A673 (cell line): ENCODE measurements at regions of chr13 and their contacts with region 1.

Region 1: DNA sequence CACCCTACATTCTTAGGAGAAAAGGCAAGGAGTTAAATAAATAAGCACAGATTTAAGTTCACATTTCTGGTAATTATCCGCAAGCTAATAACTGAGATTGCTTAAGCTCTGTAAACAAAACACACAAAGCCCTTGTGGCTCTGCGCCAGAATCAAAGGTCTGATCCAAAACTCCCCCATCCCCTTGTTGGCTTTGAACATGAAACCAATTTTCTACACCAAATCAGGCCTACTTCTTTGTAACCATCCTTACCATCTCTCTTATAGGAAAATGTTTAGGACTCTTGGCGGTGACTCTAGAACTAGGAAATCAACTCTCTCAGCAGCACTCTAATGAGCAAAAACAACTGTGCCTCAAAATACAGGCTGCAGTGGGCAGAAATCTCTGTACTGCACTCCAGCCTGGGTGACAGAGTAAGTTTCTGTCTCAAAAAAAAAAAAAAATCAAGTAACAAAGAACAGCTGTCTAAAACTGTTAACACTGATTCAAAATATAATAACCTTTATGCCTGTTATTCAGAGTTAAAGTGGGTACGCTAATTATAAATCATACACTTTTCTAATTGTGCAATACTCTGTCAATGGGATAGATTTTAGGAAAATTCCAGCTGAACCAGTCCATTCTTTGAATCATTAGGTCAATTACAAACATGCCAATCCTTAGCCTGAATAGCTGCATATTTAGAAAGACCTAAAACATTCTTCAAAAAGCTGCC is 25.8 kb downstream of the ABCC4 start:
- DNase-seq: peak; percentile 44
- H3K4me3 ChIP-seq: no peak overlapping the region
- H3K27ac ChIP-seq: peak overlapping the region; percentile 69
- H3K4me1 ChIP-seq: peaks cover 30% of the 10 kb centered on the region
- H3K27me3 ChIP-seq: no peaks in the 10 kb centered on the region
- CTCF ChIP-seq: no peak

Region 2: DNA sequence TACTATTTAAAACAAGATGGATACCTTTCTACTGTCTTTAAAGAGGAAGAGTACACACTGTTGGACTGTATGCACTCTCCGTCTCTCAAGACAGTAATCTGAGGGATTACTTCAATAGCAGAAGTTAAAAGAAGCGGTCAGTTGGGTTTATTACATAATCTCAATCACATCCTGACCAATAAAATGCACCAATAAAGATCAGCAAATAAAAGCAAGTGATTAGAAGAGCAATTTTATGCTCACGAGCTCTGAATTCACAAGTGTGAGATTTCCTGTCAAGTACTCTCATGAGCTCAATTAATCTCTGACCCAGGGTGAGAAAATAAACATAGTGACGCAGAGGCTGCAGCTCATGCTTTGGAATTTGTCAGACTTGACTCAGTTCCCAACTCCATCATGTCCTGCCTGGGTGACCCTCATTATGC is 13.6 kb after region 1 on chr13:
- CTCF ChIA-PET with region 1: no interaction called
- POLR2A ChIA-PET with region 1: interaction called, 10 read pairs
- intact Hi-C with region 1: no loop called
- DNase-seq: no peak
- H3K4me3 ChIP-seq: no peak overlapping the region
- H3K27ac ChIP-seq: no peak overlapping the region
- H3K4me1 ChIP-seq: no peaks in the 10 kb centered on the region
- H3K27me3 ChIP-seq: no peaks in the 10 kb centered on the region
- CTCF ChIP-seq: no peak

Region 3: DNA sequence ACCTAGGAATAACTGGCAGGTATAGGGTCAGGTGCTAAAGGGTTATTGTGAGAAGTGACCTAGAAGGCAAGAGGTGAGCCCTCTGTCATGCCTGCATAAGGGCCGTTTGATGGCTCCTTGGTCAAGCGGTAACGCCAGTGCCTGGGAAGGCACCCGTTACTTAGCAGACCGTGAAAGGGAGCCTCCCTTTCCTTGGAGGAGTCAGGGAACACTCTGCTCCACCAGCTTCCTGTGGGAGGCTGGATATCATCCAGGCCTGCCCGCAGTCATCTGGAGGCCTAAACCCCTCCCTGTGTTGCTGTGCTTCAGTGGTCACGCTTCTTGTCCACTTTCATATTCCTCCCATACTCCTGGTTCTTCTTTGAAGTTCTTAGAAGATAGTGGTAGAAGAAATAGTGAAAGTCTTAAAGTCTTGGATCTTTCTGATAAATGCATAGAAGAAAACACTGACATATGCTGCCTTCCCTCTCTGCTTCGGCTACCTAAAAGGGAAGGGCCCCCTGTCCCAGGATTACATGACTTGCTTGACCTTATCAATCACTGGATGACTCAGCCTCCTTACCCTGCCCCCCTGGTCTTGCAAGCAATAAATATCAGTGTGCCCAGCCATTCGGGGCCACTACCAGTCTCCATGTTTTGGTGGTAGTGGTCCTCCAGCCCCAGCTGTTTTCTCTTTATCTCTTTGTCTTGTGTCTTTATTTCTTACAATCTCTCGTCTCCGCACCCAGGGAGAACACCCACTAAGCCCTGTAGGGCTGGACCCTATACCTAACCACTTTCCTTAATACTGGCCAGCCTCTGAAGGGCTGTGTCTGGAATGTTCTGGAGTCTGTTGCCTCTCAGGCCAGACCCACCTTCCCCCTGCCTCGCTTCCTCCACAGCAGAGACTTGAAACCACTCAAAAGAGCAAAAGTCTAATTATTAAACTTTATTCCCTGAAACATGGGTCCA is 41.8 kb after region 1 on chr13:
- CTCF ChIA-PET with region 1: no interaction called
- POLR2A ChIA-PET with region 1: no interaction called
- intact Hi-C with region 1: no loop called
- DNase-seq: no peak
- H3K4me3 ChIP-seq: no peak overlapping the region
- H3K27ac ChIP-seq: no peak overlapping the region
- H3K4me1 ChIP-seq: no peaks in the 10 kb centered on the region
- H3K27me3 ChIP-seq: no peaks in the 10 kb centered on the region
- CTCF ChIP-seq: no peak